WTC11 (cell line): ENCODE measurements at regions of chr3 and their contacts with region 1.

Region 1: DNA sequence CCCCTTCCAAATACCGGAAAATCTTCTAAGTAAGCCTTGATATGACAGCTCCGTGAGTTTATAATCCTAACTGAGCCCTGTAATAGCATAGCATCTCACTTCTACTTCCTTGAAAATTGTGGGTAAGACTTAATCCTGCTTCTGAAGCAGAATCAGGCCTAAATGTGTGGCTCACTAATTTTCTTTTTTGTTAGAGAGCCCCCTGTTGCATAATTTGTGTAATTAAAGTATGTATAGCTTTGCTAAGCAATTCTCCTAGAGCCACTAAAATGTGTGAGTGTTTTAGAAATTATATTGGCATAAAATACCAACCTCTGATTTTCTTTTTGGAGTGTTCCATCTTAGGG is 304.4 kb downstream of the FGF12 start:
- DNase-seq: no peak
- ATAC-seq: peak; percentile 52
- H3K4me3 Mint-ChIP-seq: no peak overlapping the region
- H3K27ac Mint-ChIP-seq: no peak overlapping the region
- H3K4me1 Mint-ChIP-seq: peaks cover 40% of the 10 kb centered on the region
- H3K27me3 Mint-ChIP-seq: peaks cover 11% of the 10 kb centered on the region
- CTCF ChIP-seq: peak; percentile 11; the same call in 1 of the 2 replicates

Region 2: GRCh38 chr3:192220915-192221314 is 202.1 kb before region 1 on chr3:
- CTCF ChIA-PET with region 1: no interaction called
- POLR2A ChIA-PET with region 1: no interaction called
- DNase-seq: no peak
- ATAC-seq: no peak
- H3K4me3 Mint-ChIP-seq: no peak overlapping the region
- H3K27ac Mint-ChIP-seq: no peak overlapping the region
- H3K4me1 Mint-ChIP-seq: no peaks in the 10 kb centered on the region
- H3K27me3 Mint-ChIP-seq: no peaks in the 10 kb centered on the region
- CTCF ChIP-seq: no peak

Region 3: GRCh38 chr3:192409357-192409824 is 13.6 kb before region 1 on chr3:
- CTCF ChIA-PET with region 1: interaction called, 22 read pairs
- POLR2A ChIA-PET with region 1: interaction called, 3 read pairs
- DNase-seq: peak; percentile 65
- ATAC-seq: peak; percentile 52
- H3K4me3 Mint-ChIP-seq: peak overlapping the region; percentile 93
- H3K27ac Mint-ChIP-seq: no peak overlapping the region; the same call in 1 of the 2 replicates
- H3K4me1 Mint-ChIP-seq: peaks cover 57% of the 10 kb centered on the region
- H3K27me3 Mint-ChIP-seq: peaks cover 69% of the 10 kb centered on the region
- CTCF ChIP-seq: no peak